SK-N-SH (cell line): ENCODE measurements at regions of chr20 and their contacts with region 1.

Region 1: DNA sequence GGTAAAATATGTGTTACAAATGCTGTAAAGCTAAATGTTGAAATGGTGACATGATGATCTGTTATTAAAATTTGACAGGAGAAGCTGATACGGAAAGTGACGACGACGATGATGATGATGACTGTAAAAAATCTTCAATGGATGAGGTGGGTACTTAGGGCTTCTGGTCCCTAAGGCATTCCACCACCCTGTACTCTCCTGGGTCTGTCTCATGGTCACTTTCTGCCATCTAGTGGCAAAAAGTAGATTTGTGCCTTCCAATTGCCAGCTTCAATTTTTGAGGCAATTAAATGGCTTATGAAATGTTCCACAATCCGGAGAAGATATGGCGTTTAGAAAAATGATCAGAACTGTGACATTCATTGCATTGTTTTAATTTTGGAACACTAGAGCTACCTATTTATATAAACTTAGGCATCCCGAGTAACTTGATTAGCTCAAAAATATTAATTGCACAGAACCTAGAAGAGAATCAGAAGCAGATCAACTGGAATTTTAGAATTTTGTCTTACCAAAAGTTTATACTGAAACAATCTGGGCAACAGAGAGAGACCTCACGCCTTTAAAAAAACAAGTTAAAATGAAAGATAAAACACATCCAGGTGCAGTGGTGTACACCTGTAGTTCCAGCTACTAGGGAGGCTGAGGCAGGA is 346.5 kb upstream of the PLCB4 start:
- DNase-seq: peak; percentile 52
- H3K4me3 ChIP-seq: no peak overlapping the region
- H3K27ac ChIP-seq: no peak overlapping the region
- H3K4me1 ChIP-seq: peaks cover 0 to 9% of the 10 kb centered on the region in 2 experiments; a peak in 1 of 4 replicates
- H3K27me3 ChIP-seq: no peaks in the 10 kb centered on the region
- CTCF ChIP-seq: peak; percentile 86
- EP300 ChIP-seq: no peak
- RAD21 ChIP-seq: peak; percentile 96

Region 2: DNA sequence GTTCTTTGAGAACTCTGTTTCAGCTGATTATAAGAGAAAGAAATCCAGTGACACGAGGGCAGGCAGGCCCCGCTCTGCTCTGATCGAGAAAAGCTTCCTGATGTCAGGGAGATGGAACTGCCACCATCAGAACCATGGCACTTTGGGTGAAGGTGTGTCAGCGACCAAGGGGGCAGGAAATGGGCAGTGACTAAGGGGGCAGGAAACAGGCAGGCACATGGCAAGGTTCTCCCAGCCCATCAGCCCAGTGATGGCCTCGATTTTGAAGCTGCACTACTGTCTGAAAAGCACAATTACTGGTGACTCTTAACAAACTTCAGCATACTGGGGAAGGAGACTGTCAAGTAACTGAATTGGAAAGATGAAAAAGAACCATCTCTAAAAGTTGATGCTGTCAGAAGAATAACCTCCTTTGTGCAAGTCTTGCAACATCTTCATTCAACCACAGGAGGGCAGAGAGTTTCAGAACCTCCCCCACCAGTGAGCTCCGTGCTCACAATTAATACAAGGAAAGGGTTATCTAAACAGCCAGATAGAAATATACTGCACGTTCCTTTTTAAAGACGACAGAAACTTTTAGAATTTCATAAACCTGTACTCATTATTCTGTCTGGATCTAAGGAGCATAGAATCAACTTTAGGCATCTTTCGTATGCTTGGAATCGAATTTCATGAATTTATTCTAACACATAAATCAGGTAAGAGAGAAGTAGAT is 741.9 kb before region 1 on chr20:
- CTCF ChIA-PET with region 1: interaction called, 45 read pairs
- POLR2A ChIA-PET with region 1: no interaction called
- DNase-seq: peak; percentile 33
- H3K4me3 ChIP-seq: no peak overlapping the region
- H3K27ac ChIP-seq: no peak overlapping the region
- H3K4me1 ChIP-seq: no peaks in the 10 kb centered on the region; a peak in 2 of 4 replicates
- H3K27me3 ChIP-seq: no peaks in the 10 kb centered on the region
- CTCF ChIP-seq: peak; percentile 61
- EP300 ChIP-seq: no peak
- RAD21 ChIP-seq: peak; percentile 56

Region 3: GRCh38 chr20:8043687-8044282 is 678.6 kb before region 1 on chr20:
- CTCF ChIA-PET with region 1: interaction called, 155 read pairs
- POLR2A ChIA-PET with region 1: no interaction called
- DNase-seq: peak; percentile 44
- H3K4me3 ChIP-seq: no peak overlapping the region
- H3K27ac ChIP-seq: no peak overlapping the region
- H3K4me1 ChIP-seq: peaks cover 0 to 6% of the 10 kb centered on the region in 2 experiments; a peak in 2 of 4 replicates
- H3K27me3 ChIP-seq: no peaks in the 10 kb centered on the region
- CTCF ChIP-seq: peak; percentile 81
- EP300 ChIP-seq: no peak
- RAD21 ChIP-seq: peak; percentile 83

Region 4: GRCh38 chr20:8131598-8132483 is 590.6 kb before region 1 on chr20 and contains the start of gene PLCB1:
- CTCF ChIA-PET with region 1: interaction called, 269 read pairs
- POLR2A ChIA-PET with region 1: no interaction called
- DNase-seq: peak; percentile 96
- H3K4me3 ChIP-seq: peak within 1 kb of the TSS; percentile 82 to 84
- H3K27ac ChIP-seq: peak within 1 kb of the TSS; percentile 50 to 86; a peak in 3 of 4 replicates
- H3K4me1 ChIP-seq: peaks cover 17% of the 10 kb centered on the region in 2 experiments; a peak in 3 of 4 replicates
- H3K27me3 ChIP-seq: no peaks in the 10 kb centered on the region
- CTCF ChIP-seq: peak; percentile 82
- EP300 ChIP-seq: 0 out of 4 replicates have a peak, but pooled peaks of 1 of the 2 experiments have one; percentile 12
- RAD21 ChIP-seq: peak; percentile 90
- polyA plus RNA-seq, gene PLCB1: 10.5 and 13.0 TPM in 2 replicates

Region 5: GRCh38 chr20:8431538-8432434 is 290.6 kb before region 1 on chr20:
- CTCF ChIA-PET with region 1: interaction called, 12 read pairs
- POLR2A ChIA-PET with region 1: no interaction called
- DNase-seq: peak; percentile 62
- H3K4me3 ChIP-seq: peak overlapping the region; percentile 15 to 31
- H3K27ac ChIP-seq: peak overlapping the region; percentile 82 to 99
- H3K4me1 ChIP-seq: peaks cover 25 to 36% of the 10 kb centered on the region in 2 experiments
- H3K27me3 ChIP-seq: no peaks in the 10 kb centered on the region
- CTCF ChIP-seq: no peak
- EP300 ChIP-seq: peak; percentile 55 to 86; a peak in 3 of 4 replicates
- RAD21 ChIP-seq: peak; percentile 41

Region 6: DNA sequence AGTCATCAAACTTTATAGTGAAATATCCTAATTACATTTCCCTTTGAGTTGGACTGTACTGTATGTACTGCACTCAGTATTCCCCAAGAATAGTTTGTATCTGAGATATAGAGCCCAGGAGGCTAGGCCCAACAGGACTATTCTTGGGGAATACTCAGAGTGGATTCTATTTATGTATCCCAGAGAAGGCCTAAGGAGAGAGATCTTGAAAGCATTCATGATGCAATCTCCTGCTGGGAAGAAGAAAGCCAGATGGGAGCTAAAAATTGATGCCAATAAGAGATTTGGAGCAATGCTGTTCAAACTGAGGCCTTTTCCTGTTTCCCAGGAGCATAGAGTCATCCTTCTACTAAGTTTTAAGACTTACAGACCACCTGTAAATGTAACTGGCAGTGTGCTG is 105.6 kb before region 1 on chr20:
- CTCF ChIA-PET with region 1: interaction called, 10 read pairs
- POLR2A ChIA-PET with region 1: no interaction called
- DNase-seq: no peak
- H3K4me3 ChIP-seq: no peak overlapping the region
- H3K27ac ChIP-seq: peak overlapping the region in 1 of 2 experiments; percentile 47; a peak in 2 of 4 replicates
- H3K4me1 ChIP-seq: peaks cover 0 to 9% of the 10 kb centered on the region in 2 experiments; a peak in 3 of 4 replicates
- H3K27me3 ChIP-seq: no peaks in the 10 kb centered on the region
- CTCF ChIP-seq: no peak
- EP300 ChIP-seq: no peak
- RAD21 ChIP-seq: no peak

Region 7: DNA sequence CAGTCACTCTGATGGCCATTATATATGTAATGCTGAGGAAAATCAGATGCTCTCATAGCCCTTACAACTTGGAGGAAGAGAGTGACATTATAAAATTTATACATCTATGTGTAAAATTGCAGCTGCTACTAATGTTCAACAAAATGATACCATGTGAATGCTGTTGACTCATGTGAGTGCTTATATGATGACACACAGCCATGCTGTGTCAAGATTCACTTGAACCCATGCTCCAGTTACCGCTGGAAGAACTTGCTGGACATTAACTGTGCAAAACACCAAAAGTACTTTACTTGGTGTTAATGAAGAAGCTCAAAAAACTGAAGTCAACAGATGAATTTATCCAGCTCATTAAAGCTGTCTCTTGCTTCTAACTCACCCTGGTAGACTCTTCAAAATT is 27.6 kb after region 1 on chr20:
- CTCF ChIA-PET with region 1: interaction called, 21 read pairs
- POLR2A ChIA-PET with region 1: no interaction called
- DNase-seq: no peak
- H3K4me3 ChIP-seq: no peak overlapping the region
- H3K27ac ChIP-seq: no peak overlapping the region
- H3K4me1 ChIP-seq: peaks cover 4% of the 10 kb centered on the region in 2 experiments; a peak in 2 of 4 replicates
- H3K27me3 ChIP-seq: no peaks in the 10 kb centered on the region
- CTCF ChIP-seq: no peak
- EP300 ChIP-seq: no peak
- RAD21 ChIP-seq: no peak

Region 8: DNA sequence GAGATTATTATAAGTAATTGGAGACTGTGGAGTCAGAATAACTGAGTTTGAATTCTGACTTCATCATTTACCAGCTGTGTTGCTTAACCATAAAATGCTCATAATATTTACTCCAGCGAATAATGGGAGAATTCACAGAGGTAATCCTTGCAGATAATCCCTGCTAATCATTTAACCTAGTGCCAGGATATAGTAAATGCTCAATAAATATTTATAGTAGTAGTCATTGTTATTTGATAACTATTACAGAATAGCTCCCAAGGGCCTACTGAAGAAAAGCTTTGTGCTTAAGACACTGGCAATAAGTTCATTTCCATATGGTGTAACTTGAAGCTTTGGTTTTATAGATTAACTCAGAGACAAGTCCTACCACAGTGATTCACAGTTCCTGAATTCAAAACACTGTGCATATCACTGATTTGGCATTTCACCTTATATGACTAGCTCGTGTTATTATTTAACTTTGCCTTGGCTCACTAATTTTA is 137.7 kb after region 1 on chr20:
- CTCF ChIA-PET with region 1: no interaction called
- POLR2A ChIA-PET with region 1: no interaction called
- DNase-seq: no peak
- H3K4me3 ChIP-seq: no peak overlapping the region
- H3K27ac ChIP-seq: peak overlapping the region in 1 of 2 experiments; percentile 58; a peak in 2 of 4 replicates
- H3K4me1 ChIP-seq: peaks cover 0 to 11% of the 10 kb centered on the region in 2 experiments
- H3K27me3 ChIP-seq: no peaks in the 10 kb centered on the region
- CTCF ChIP-seq: no peak
- EP300 ChIP-seq: no peak
- RAD21 ChIP-seq: no peak